Activated CD4-positive, alpha-beta T cell treated with anti-CD3 and anti-CD28 coated beads for 36 hours (primary cell): ENCODE measurements at regions of chr10 and their contacts with region 1.

Region 1: GRCh38 chr10:96327462-96327861 is 23.2 kb downstream of the DNTT start:
- DNase-seq: no peak
- ATAC-seq: no peak
- H3K4me3 Mint-ChIP-seq: no peak overlapping the region
- H3K27ac Mint-ChIP-seq: no peak overlapping the region
- H3K4me1 Mint-ChIP-seq: peaks cover 9% of the 10 kb centered on the region
- H3K27me3 Mint-ChIP-seq: peaks cover 2% of the 10 kb centered on the region

Region 2: DNA sequence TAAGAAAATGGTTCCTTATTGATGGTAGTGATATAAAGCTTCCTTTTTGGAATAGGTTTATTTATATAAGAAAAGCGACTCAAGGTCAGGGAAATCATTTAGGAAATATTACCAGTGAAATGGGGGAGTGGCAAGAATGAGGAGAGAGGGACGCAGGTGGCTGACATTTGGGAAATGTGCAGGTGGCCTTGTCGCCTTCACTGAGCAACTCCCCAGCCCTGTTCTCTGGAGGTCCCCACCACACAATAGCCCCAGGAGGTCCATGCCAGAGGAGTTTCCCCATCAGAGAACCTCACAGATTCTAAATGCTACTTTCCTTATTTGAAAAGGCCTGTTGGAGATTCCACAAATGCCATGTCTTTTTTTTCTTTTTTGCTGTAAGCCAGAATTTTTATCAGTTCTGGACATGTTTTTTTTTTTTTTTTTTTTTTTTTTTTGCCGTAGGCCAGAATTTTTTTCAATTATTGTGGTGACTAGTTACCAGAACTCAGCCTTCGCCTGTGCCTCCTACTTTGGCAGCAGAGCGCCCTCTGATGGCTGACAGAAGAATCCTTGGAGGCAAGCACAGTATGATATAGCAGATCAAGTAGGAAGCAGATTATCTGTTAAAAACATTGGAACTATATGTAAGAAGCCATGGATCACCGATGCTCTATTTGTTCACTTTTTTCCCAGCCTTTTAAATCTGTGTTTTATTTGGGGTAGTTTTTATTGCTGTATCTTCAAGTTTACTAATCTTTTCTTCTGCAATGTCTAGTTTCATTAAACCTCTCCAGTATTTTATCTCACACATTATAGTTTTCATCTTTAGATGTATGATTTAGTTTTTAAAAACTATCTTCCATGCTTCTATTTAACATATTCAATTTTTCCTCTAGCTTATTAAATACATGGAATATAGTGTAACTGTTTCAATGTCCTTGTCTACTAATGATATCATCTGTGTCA is 12.8 kb after region 1 on chr10:
- CTCF ChIA-PET with region 1: interaction called, 24 read pairs
- POLR2A ChIA-PET with region 1: no interaction called
- intact Hi-C with region 1: no loop called
- DNase-seq: peak; percentile 83
- ATAC-seq: peak; percentile 77
- H3K4me3 Mint-ChIP-seq: no peak overlapping the region
- H3K27ac Mint-ChIP-seq: no peak overlapping the region
- H3K4me1 Mint-ChIP-seq: peaks cover 9% of the 10 kb centered on the region
- H3K27me3 Mint-ChIP-seq: peaks cover 6% of the 10 kb centered on the region